Left lung (tissue), 14 donors: ENCODE measurements at regions of chrX and their contacts with region 1.

Region 1: GRCh38 chrX:18899796-18900447 is 84.0 kb downstream of the PHKA2 start:
- DNase-seq: peak in 1 of 4 donors; percentile 16
- ATAC-seq: peak; percentile 56
- H3K4me3 ChIP-seq: no peak overlapping the region
- H3K27ac ChIP-seq: no peak overlapping the region
- H3K4me1 ChIP-seq: no peaks in the 10 kb centered on the region
- H3K27me3 ChIP-seq: peaks cover 0 to 3% of the 10 kb centered on the region in 2 donors
- CTCF ChIP-seq: no peak

Region 2: DNA sequence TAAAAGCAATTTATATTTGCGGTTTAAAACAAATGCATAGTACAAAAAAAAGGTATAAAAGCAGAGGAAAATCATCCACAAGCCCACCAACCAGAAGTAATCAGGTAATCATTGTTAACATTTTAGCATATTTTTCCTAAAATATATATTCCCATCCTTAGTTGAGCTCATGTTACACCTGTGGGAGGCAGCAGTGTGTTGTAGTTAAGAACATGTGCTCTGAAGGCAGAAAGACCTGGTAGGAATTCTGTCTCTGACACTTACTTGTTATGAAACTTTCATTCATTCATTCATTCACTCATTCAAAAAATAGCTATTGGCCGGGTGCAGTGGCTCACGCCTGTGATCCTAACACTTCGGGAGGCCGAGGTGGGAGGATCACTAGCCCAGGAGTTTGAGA is 489.9 kb before region 1 on chrX:
- intact Hi-C with region 1: loop called in 1 of 2 experiments (anchors 10 kb)
- DNase-seq: no peak
- ATAC-seq: peak; percentile 66
- H3K4me3 ChIP-seq: no peak overlapping the region
- H3K27ac ChIP-seq: no peak overlapping the region
- H3K4me1 ChIP-seq: no peaks in the 10 kb centered on the region
- H3K27me3 ChIP-seq: no peaks in the 10 kb centered on the region
- CTCF ChIP-seq: no peak